ENCODE measurements at regions of chr5 and their contacts with region 1.

Region 1: DNA sequence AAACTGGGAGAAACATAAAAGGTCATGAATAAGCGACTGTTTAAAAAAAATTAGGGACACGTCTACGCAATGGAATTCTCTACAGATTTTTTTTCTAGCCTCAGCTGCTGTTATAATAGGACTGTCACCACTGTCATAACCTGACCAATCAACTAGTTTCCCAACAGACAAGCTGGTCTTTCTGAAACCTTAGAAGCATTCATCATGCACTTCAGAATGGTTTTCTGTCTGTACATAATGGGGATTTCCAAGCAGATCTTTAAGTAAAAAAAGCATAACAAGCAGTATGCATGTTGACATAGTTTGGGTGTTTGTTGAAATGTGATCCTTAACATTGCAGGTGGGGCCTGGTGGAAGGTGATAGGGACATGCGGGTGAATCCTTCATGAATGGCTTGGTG is 58.3 kb upstream of the SEMA6A start:
- DNase-seq: no peak
- ATAC-seq: peak; percentile 87
- H3K4me3 ChIP-seq: no peak overlapping the region
- H3K27ac ChIP-seq: no peak overlapping the region
- H3K4me1 ChIP-seq: peaks cover 3% of the 10 kb centered on the region; the same call in 1 of the 2 replicates
- H3K27me3 ChIP-seq: no peaks in the 10 kb centered on the region
- CTCF ChIP-seq: no peak
- EP300 ChIP-seq: peak in 1 of 2 experiments; percentile 24; a peak in 1 of 4 replicates
- POLR2A ChIP-seq: no peak
- RAD21 ChIP-seq: no peak

Region 2: GRCh38 chr5:116645627-116646026 is 12.7 kb after region 1 on chr5:
- CTCF ChIA-PET with region 1: interaction called, 9 read pairs
- POLR2A ChIA-PET with region 1: interaction called, 6 read pairs
- RAD21 ChIA-PET with region 1: interaction called, 5 read pairs
- SMC1A ChIA-PET with region 1: interaction called, 58 read pairs
- in situ Hi-C with region 1: no loop called
- intact Hi-C with region 1: no loop called
- DNase-seq: no peak
- ATAC-seq: peak; percentile 92
- H3K4me3 ChIP-seq: no peak overlapping the region
- H3K27ac ChIP-seq: no peak overlapping the region
- H3K4me1 ChIP-seq: no peaks in the 10 kb centered on the region
- H3K27me3 ChIP-seq: no peaks in the 10 kb centered on the region
- CTCF ChIP-seq: no peak
- EP300 ChIP-seq: peak in 1 of 2 experiments; percentile 38; a peak in 1 of 4 replicates
- POLR2A ChIP-seq: no peak
- RAD21 ChIP-seq: no peak

Region 3: GRCh38 chr5:116730706-116731105 is 97.8 kb after region 1 on chr5:
- CTCF ChIA-PET with region 1: no interaction called
- POLR2A ChIA-PET with region 1: no interaction called
- RAD21 ChIA-PET with region 1: no interaction called
- SMC1A ChIA-PET with region 1: no interaction called
- in situ Hi-C with region 1: no loop called
- intact Hi-C with region 1: no loop called
- DNase-seq: no peak
- ATAC-seq: no peak
- H3K4me3 ChIP-seq: no peak overlapping the region
- H3K27ac ChIP-seq: no peak overlapping the region
- H3K4me1 ChIP-seq: no peaks in the 10 kb centered on the region
- H3K27me3 ChIP-seq: no peaks in the 10 kb centered on the region
- CTCF ChIP-seq: no peak
- EP300 ChIP-seq: no peak
- POLR2A ChIP-seq: no peak
- RAD21 ChIP-seq: no peak

Measured in GM12878 (cell line).